ENCODE measurements at regions of chr5 and their contacts with region 1.

Region 1: DNA sequence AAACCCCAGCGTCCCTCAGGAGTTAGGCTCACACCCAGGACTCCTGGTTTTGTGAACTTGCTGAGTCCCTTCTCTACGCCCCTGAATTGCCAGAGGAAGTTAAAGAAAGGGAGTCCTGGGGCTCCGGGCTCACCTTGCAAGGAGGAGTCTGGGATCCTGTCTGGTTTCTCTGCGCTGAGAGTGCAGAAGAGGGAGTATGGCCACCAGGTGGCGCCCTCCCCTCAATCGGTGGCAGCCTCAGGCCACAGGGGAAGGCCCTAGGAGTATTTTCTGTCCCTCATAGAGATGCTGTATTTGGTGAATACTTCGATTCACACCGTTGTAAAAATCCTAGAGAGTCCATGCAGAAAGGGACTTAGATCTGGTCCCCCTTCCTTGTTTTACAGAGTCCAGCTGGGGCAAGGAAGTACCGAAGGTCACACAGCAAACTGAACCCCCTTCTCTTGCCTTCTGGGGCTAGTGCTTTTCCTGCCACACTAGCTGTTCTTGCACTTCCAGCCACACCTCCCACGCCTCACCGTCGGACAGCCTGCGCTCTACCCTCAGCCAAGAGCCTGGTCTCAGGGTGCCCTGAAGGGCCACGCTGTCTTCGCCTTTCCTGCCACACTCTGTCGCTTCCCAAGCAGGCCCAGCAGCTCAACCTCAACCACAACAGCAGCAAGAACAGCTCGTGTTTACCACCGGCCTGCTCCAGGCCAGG is 10.2 kb downstream of the HAND1 start:
- DNase-seq: peak; percentile 85
- H3K4me3 ChIP-seq: no peak overlapping the region; a peak in 1 of 4 replicates
- H3K27ac ChIP-seq: peak overlapping the region in 1 of 2 experiments; percentile 53; a peak in 1 of 4 replicates
- H3K4me1 ChIP-seq: peaks cover 0 to 39% of the 10 kb centered on the region in 2 experiments; a peak in 2 of 4 replicates
- H3K27me3 ChIP-seq: no peaks in the 10 kb centered on the region; the same call in 1 of the 2 replicates
- CTCF ChIP-seq: peak; percentile 93
- EP300 ChIP-seq: no peak; a peak in 1 of 4 replicates
- RAD21 ChIP-seq: peak; percentile 94

Region 2: DNA sequence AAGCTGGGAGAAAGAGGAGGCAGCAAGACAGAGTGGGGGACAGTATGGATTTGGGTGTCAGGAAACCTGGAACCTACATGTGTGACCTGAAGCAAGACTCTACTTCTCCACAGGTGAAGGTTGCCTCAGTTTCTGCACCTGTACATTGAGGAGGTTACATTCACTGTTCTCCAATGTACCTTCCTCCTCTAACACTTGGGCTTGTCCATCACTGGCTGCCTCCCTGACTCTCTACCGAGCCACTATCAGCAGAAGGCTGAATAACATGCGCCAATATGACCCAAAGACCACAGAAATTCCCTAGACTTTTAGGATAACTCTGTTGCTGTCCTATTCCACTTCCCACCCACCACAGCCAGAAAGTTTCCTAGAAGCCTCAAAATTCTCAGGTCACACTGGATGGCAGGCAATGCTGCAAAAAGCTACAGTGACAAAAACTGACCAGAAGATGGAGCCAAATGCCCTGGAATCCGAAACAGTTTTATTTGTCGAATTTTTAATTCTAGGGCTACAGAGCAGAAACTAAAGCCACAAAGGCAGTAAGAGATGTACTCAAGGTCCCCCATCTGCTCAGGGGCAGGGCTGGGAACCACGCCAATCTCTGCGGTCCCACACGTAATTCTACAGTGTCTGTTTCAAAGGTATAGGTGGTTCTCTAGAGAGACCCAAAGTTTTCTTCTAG is 493.5 kb before region 1 on chr5:
- CTCF ChIA-PET with region 1: interaction called, 13 read pairs
- POLR2A ChIA-PET with region 1: no interaction called
- DNase-seq: peak; percentile 48
- H3K4me3 ChIP-seq: no peak overlapping the region
- H3K27ac ChIP-seq: no peak overlapping the region
- H3K4me1 ChIP-seq: no peaks in the 10 kb centered on the region
- H3K27me3 ChIP-seq: no peaks in the 10 kb centered on the region
- CTCF ChIP-seq: peak; percentile 84
- EP300 ChIP-seq: no peak
- RAD21 ChIP-seq: peak; percentile 90

Region 3: DNA sequence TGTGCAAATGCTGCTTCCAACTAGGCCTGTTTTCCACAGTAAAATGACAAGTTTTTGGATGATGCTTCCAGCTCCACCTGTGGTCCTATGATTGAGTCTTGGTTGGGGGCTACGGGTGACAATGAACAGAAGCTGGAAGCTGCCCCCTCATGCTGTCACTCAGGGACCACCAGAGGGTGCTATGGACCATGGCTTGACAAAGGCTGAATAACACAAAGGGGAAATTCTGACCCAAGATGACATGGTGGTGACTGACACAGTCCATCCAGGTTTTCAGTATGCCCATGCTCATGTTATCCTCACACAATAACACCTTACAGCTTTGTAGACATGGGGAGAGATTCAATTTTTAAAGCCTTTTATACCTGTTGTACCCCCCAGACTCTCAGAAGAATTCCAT is 45.9 kb before region 1 on chr5:
- CTCF ChIA-PET with region 1: interaction called, 19 read pairs
- POLR2A ChIA-PET with region 1: no interaction called
- DNase-seq: peak; percentile 58
- H3K4me3 ChIP-seq: no peak overlapping the region
- H3K27ac ChIP-seq: no peak overlapping the region
- H3K4me1 ChIP-seq: peaks cover 0 to 8% of the 10 kb centered on the region in 2 experiments; a peak in 2 of 4 replicates
- H3K27me3 ChIP-seq: no peaks in the 10 kb centered on the region
- CTCF ChIP-seq: peak; percentile 51
- EP300 ChIP-seq: no peak
- RAD21 ChIP-seq: peak; percentile 75

Region 4: GRCh38 chr5:154478224-154478565 is 10.4 kb after region 1 on chr5 and contains the start of gene HAND1:
- CTCF ChIA-PET with region 1: interaction called, 12 read pairs
- POLR2A ChIA-PET with region 1: interaction called, 29 read pairs
- DNase-seq: peak; percentile 99
- H3K4me3 ChIP-seq: peak within 1 kb of the TSS; percentile 60 to 74
- H3K27ac ChIP-seq: peak within 1 kb of the TSS in 1 of 2 experiments; percentile 96; a peak in 2 of 4 replicates
- H3K4me1 ChIP-seq: peaks cover 0 to 46% of the 10 kb centered on the region in 2 experiments; a peak in 1 of 4 replicates
- H3K27me3 ChIP-seq: peaks cover 94% of the 10 kb centered on the region
- CTCF ChIP-seq: no peak
- EP300 ChIP-seq: no peak; a peak in 1 of 4 replicates
- RAD21 ChIP-seq: 0 out of 2 replicates have a peak, but pooled peaks have one; percentile 24
- polyA plus RNA-seq, gene HAND1: 1.1 and 2.6 TPM in 2 replicates

Region 5: DNA sequence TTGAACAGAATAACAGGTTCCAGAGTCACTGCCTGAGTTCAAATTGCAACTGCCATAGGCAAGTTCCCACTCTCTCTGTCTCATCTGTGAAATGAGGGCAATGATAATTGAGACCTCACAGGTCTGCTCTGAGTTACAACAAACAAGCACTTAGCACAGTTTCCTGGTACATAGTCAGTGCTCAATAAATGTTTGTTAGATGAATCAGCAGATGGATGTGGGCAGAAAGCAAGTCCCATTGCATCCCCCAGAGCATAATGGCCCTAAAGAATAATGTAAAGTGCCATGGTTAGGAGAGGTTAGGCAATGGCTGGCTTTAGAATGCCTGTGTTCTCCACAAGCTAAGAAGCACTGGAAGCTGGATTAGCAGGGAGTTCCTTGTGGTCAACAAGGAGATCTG is 150.9 kb after region 1 on chr5:
- CTCF ChIA-PET with region 1: interaction called, 161 read pairs
- POLR2A ChIA-PET with region 1: no interaction called
- DNase-seq: no peak
- H3K4me3 ChIP-seq: no peak overlapping the region
- H3K27ac ChIP-seq: no peak overlapping the region
- H3K4me1 ChIP-seq: peaks cover 0 to 6% of the 10 kb centered on the region in 2 experiments; a peak in 1 of 4 replicates
- H3K27me3 ChIP-seq: peaks cover 7% of the 10 kb centered on the region
- CTCF ChIP-seq: no peak
- EP300 ChIP-seq: no peak
- RAD21 ChIP-seq: no peak